ENCODE measurements at regions of chr12 and their contacts with region 1.

Region 1: DNA sequence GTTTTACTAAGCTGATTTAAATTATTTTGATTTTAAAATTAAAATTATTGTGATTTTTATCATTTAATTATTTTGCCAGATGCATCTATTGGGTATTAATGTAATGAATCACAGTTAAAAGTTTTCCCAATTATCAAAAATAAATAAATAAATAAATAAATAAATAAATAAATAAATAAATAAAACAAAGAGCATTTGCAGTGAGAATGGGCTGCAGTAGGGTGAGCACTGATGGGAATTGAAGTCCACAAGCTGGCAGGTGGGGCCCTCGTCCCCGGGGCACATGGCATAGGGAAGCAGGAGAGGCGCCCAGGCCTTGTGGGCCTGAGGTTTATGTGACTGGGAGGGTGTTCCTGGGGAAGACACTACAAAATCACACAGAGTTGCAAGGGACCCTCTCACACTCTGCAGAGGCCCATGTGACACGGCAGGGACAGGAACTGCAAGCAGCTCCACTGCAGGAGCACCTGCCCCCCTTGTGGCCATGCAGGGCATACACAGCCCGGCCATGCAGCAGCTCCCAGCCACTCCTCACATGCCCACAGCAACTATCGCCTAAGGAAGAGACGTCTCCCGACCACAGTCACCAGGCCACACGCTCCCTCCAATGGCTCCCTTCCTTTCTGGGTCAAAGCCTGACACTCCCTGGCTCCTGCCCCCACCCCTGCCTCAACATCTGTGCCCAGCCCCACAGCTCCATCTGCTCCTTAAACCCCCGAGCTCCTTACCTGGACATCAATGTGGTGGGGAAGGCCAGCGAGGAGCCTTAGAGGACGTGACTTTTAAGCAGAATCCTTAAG is 256.3 kb upstream of the SFSWAP start:
- DNase-seq: peak; percentile 13
- ATAC-seq: peak; percentile 98
- H3K4me3 ChIP-seq: no peak overlapping the region
- H3K27ac ChIP-seq: no peak overlapping the region
- H3K4me1 ChIP-seq: no peaks in the 10 kb centered on the region
- H3K27me3 ChIP-seq: peaks cover 9% of the 10 kb centered on the region
- CTCF ChIP-seq: peak; percentile 90

Region 2: GRCh38 chr12:130916251-130916911 is 538.2 kb before region 1 on chr12:
- CTCF ChIA-PET with region 1: no interaction called
- POLR2A ChIA-PET with region 1: no interaction called
- in situ Hi-C with region 1: no loop called
- intact Hi-C with region 1: loop called (anchors 5 kb)
- DNase-seq: peak; percentile 28
- ATAC-seq: peak; percentile 93
- H3K4me3 ChIP-seq: peak overlapping the region in 1 of 2 experiments; percentile 37; a peak in 3 of 4 replicates
- H3K27ac ChIP-seq: no peak overlapping the region
- H3K4me1 ChIP-seq: peaks cover 12% of the 10 kb centered on the region
- H3K27me3 ChIP-seq: peaks cover 44% of the 10 kb centered on the region
- CTCF ChIP-seq: peak; percentile 96

Region 3: DNA sequence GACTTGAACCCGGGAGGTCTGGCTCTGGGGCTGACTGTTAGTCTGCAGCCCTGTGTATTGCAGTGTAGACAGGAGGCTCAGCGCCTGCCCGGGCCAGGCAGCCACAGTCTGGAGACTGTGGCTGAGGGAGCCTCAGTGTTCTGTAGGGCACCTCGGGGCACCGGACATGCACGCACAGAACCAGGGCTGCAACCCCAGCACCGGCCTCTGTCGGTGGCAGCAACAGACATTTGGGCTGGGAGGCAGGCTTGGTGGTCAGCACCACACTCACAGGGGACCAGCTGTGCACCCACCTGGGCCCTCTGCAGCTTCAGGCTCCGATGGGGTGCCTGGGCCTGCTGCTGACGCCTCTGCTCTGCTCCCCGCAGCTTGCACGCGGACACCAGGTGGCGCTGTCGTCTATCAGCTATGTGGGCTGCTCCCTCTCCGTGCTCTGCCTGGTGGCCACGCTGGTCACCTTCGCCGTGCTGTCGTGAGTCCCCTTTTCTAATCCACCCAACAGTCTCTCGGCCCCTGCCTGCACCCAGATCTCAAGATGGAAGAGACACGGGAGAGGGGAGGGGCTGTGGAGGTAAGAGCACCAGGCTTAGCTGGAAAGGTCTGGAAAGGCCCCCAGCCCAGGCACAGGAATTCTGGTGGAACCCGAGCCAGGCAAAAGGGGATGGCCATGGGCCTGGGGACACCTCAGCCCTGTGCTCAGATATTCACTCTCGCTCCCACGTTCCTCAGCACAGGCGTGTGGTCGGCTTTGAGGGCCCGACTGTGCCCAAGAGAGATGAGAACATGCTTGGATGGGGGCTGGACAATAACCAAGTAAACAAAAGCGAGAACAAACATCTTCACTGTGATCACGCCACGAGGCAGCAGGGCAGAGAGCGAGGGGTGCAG is 349.9 kb before region 1 on chr12:
- CTCF ChIA-PET with region 1: interaction called, 9 read pairs
- POLR2A ChIA-PET with region 1: no interaction called
- in situ Hi-C with region 1: no loop called
- intact Hi-C with region 1: loop called (anchors 5 kb)
- DNase-seq: peak; percentile 33
- ATAC-seq: peak; percentile 99
- H3K4me3 ChIP-seq: no peak overlapping the region
- H3K27ac ChIP-seq: no peak overlapping the region
- H3K4me1 ChIP-seq: no peaks in the 10 kb centered on the region
- H3K27me3 ChIP-seq: peaks cover 3% of the 10 kb centered on the region; the same call in 1 of the 2 replicates
- CTCF ChIP-seq: peak; percentile 96

Region 4: DNA sequence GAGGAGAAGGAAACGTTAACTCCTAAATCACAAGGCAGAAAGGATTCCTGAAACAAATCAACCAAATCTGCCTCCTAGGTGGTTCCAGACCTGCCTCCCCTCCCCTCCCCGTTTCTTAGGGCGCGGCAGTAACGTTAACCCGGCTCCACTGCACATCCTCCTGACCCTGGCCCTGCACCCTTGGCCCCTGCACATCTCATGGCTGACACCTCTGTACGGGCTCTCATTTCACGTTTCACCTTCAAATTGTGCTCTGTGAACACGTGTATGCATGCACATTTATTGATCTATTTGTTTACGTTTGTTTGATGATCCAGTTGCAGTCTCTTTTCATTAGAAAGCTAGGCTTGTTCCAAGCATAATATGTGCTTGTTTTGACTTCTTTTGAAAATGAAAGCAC is 142.9 kb before region 1 on chr12:
- CTCF ChIA-PET with region 1: no interaction called
- POLR2A ChIA-PET with region 1: no interaction called
- in situ Hi-C with region 1: no loop called
- intact Hi-C with region 1: no loop called
- DNase-seq: no peak
- ATAC-seq: no peak; the same call in 1 of the 2 replicates
- H3K4me3 ChIP-seq: no peak overlapping the region
- H3K27ac ChIP-seq: no peak overlapping the region
- H3K4me1 ChIP-seq: no peaks in the 10 kb centered on the region
- H3K27me3 ChIP-seq: no peaks in the 10 kb centered on the region
- CTCF ChIP-seq: no peak

Region 5: GRCh38 chr12:131441060-131441396 is 13.6 kb before region 1 on chr12:
- CTCF ChIA-PET with region 1: no interaction called
- POLR2A ChIA-PET with region 1: no interaction called
- in situ Hi-C with region 1: no loop called
- intact Hi-C with region 1: no loop called
- DNase-seq: no peak
- ATAC-seq: peak; percentile 24; the same call in 1 of the 2 replicates
- H3K4me3 ChIP-seq: no peak overlapping the region
- H3K27ac ChIP-seq: no peak overlapping the region
- H3K4me1 ChIP-seq: no peaks in the 10 kb centered on the region
- H3K27me3 ChIP-seq: no peaks in the 10 kb centered on the region; the same call in 1 of the 2 replicates
- CTCF ChIP-seq: no peak